Activated B cell treated with CpG ODN at 0.5 μM for 24 hours (primary cell): ENCODE measurements at regions of chr10 and their contacts with region 1.

Region 1: GRCh38 chr10:50624866-50625692 is 1.3 kb upstream of the SGMS1 start:
- DNase-seq: no peak
- ATAC-seq: peak; percentile 51
- H3K4me3 Mint-ChIP-seq: peak overlapping the region; percentile 91
- H3K27ac Mint-ChIP-seq: peak overlapping the region; percentile 96
- H3K4me1 Mint-ChIP-seq: peaks cover 30% of the 10 kb centered on the region
- H3K27me3 Mint-ChIP-seq: no peaks in the 10 kb centered on the region
- CTCF ChIP-seq: no peak

Region 2: GRCh38 chr10:50210876-50211275 is 414.2 kb before region 1 on chr10:
- CTCF ChIA-PET with region 1: no interaction called
- POLR2A ChIA-PET with region 1: no interaction called
- intact Hi-C with region 1: no loop called
- DNase-seq: no peak
- ATAC-seq: no peak
- H3K4me3 Mint-ChIP-seq: no peak overlapping the region
- H3K27ac Mint-ChIP-seq: no peak overlapping the region
- H3K4me1 Mint-ChIP-seq: no peaks in the 10 kb centered on the region
- H3K27me3 Mint-ChIP-seq: peaks cover 8% of the 10 kb centered on the region
- CTCF ChIP-seq: no peak

Region 3: GRCh38 chr10:50224330-50224952 is 400.6 kb before region 1 on chr10:
- CTCF ChIA-PET with region 1: no interaction called
- POLR2A ChIA-PET with region 1: no interaction called
- intact Hi-C with region 1: loop called (anchors 5 kb)
- DNase-seq: no peak
- ATAC-seq: peak; percentile 69
- H3K4me3 Mint-ChIP-seq: no peak overlapping the region
- H3K27ac Mint-ChIP-seq: no peak overlapping the region
- H3K4me1 Mint-ChIP-seq: no peaks in the 10 kb centered on the region
- H3K27me3 Mint-ChIP-seq: peaks cover 9% of the 10 kb centered on the region
- CTCF ChIP-seq: no peak

Region 4: GRCh38 chr10:50362547-50363125 is 262.4 kb before region 1 on chr10:
- CTCF ChIA-PET with region 1: interaction called, 9 read pairs
- POLR2A ChIA-PET with region 1: interaction called, 3 read pairs
- intact Hi-C with region 1: loop called (anchors 1 kb)
- DNase-seq: no peak
- ATAC-seq: peak; percentile 92
- H3K4me3 Mint-ChIP-seq: peak overlapping the region; percentile 29
- H3K27ac Mint-ChIP-seq: peak overlapping the region; percentile 87
- H3K4me1 Mint-ChIP-seq: peaks cover 53% of the 10 kb centered on the region
- H3K27me3 Mint-ChIP-seq: no peaks in the 10 kb centered on the region
- CTCF ChIP-seq: no peak

Region 5: GRCh38 chr10:50508315-50509051 is 116.6 kb before region 1 on chr10:
- CTCF ChIA-PET with region 1: no interaction called
- POLR2A ChIA-PET with region 1: interaction called, 9 read pairs
- intact Hi-C with region 1: loop called (anchors 1 kb)
- DNase-seq: no peak
- ATAC-seq: peak; percentile 80
- H3K4me3 Mint-ChIP-seq: peak overlapping the region; percentile 20
- H3K27ac Mint-ChIP-seq: peak overlapping the region; percentile 61
- H3K4me1 Mint-ChIP-seq: peaks cover 64% of the 10 kb centered on the region
- H3K27me3 Mint-ChIP-seq: no peaks in the 10 kb centered on the region
- CTCF ChIP-seq: no peak

Region 6: DNA sequence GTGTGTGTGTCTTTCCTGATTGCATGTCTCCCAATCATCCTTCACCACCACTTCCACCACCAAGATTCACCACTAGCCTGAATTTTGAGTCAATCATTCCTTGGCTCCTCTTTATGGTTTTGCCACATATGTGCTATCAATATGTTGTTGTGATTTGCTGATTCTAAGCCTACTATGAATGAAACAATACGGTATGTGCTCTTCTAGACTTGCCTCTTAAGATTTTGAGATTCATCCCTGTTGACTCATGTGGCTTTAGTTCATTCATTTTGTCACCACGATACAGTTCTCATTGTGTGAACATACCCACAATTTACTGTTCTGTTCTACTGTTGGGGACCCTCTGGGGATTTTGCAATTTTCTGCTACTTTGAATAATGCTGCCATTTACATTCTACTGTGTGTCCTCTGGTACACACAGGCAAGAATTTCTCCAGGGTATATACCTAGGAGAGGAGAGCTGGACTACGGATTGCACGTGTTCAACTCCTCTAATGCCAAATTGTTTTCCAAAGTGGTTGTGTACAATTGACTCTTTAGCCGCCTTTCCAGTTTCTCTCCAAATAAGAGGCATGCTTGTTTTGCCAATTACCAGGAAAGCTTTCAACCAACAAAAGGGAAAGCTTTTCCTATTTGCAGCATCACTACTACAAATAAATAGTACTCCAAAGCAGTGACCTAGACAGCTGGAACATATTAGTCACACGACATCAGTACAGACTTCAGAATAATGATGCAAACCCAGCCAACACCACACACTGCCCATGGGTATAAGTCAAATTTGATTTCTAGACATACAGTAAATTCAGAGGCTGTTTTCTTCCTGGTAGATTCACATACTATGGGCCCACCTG is 31.3 kb before region 1 on chr10:
- CTCF ChIA-PET with region 1: no interaction called
- POLR2A ChIA-PET with region 1: no interaction called
- intact Hi-C with region 1: no loop called
- DNase-seq: no peak
- ATAC-seq: no peak
- H3K4me3 Mint-ChIP-seq: no peak overlapping the region
- H3K27ac Mint-ChIP-seq: no peak overlapping the region
- H3K4me1 Mint-ChIP-seq: peaks cover 7% of the 10 kb centered on the region
- H3K27me3 Mint-ChIP-seq: no peaks in the 10 kb centered on the region
- CTCF ChIP-seq: no peak

Region 7: DNA sequence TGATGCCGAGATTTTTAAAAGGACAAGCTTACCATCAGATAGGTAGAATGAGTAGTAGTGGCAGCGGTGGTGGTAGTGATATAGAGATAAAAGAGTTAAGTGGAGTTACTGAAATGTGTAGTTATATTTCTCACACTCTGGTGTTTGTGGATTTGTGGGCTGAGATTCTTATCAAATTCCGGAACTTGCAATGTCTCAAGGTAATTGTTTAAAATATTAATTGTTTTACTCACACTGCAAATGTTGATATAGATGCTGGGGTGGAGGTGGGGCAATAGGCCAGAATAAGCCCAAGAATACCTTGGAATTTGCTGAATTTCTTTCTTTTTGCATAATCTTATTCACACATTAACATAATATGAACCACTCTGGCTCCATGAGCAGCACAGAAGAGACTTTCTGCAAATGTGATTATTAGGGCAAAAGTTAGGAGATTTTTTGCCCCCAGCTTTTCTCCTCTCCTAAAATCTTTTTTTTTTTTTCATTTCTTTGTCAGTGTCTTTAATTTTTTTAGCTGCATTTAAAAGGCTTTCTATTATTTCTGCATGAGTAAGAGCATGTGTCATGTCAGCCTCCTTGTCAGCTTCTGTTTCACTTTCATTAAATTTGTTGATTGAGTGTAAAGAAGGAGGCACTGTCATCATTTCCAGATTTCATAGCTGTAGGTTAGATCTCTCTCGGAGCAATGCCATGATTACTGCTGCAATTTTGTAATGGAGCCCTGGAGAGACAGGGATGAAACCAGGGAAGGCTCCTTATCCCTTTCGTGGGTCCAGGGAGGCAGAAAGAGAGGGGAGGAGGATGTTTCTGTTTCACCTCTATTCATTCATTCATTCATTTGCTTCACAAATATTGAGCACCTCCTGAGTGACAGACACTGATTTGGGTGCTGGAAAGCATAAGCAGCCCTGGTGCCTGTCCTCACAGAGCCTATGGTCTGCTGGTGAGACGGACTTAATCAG is 11.8 kb after region 1 on chr10:
- CTCF ChIA-PET with region 1: no interaction called
- POLR2A ChIA-PET with region 1: interaction called, 25 read pairs
- intact Hi-C with region 1: loop called (anchors 1 kb)
- DNase-seq: no peak
- ATAC-seq: peak; percentile 76
- H3K4me3 Mint-ChIP-seq: peak overlapping the region; percentile 50
- H3K27ac Mint-ChIP-seq: peak overlapping the region; percentile 39
- H3K4me1 Mint-ChIP-seq: peaks cover 15% of the 10 kb centered on the region
- H3K27me3 Mint-ChIP-seq: no peaks in the 10 kb centered on the region
- CTCF ChIP-seq: no peak

Region 8: GRCh38 chr10:51699475-51700227 is 1074.6 kb after region 1 on chr10 and contains the start of gene CSTF2T:
- CTCF ChIA-PET with region 1: no interaction called
- POLR2A ChIA-PET with region 1: no interaction called
- intact Hi-C with region 1: loop called (anchors 1 kb)
- DNase-seq: peak; percentile 81
- ATAC-seq: peak; percentile 90
- H3K4me3 Mint-ChIP-seq: peak within 1 kb of the TSS; percentile 99
- H3K27ac Mint-ChIP-seq: peak within 1 kb of the TSS; percentile 100
- H3K4me1 Mint-ChIP-seq: peaks cover 52% of the 10 kb centered on the region
- H3K27me3 Mint-ChIP-seq: no peaks in the 10 kb centered on the region
- CTCF ChIP-seq: no peak
- total RNA-seq, gene CSTF2T: 39.3 and 40.8 TPM in 2 replicates